WTC11 (cell line): ENCODE measurements at regions of chr19 and their contacts with region 1.

Region 1: DNA sequence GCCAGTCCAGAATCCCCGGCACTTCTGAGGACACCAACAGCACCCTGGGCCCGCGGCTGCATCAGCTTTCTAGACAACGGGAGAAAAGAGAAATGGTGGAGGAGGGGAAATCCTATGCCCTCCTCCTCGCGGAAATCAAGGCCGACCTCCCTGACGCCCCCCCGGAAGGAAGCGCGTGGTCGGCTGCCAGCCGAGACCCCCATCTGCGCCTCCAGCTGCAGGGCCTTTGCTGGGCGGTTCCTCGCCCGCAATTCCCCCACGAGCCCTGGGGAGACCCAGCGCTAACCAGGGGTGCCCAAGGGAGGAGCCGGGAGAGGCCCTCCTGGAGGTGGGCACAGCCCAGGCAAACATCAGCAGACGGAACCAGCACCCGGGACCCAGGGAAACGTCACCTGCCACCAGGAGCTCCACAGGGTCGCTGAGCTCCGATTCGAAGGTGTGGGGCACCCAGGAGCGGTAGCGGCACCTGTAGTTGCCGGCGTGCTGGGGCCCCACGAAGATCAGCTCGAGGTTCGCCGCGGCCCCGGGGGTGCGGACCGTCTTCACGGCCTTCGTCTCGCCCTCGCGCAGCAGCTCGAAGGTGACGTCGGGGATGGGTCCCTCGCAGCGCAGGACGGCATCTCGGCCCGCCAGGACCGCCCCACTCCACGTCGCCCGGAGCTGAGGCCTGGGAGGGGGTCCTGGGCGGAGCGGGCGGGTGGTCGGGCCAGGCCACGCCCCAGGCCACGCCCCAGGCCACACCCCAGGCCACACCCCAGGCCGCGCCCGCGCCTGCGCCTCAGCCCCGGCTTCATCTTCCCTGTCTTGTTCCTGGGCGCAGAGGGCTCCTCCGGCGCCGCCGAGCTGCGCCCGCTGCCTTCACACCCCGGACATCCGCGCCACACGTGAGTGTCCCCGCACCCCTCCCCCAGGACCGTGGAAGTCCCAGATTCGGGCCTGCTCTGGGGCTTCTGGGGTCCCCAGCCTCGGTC is 6.0 kb downstream of the A1BG start:
- DNase-seq: peak; percentile 67
- ATAC-seq: peak; percentile 96
- H3K4me3 Mint-ChIP-seq: peak overlapping the region; percentile 93
- H3K27ac Mint-ChIP-seq: no peak overlapping the region
- H3K4me1 Mint-ChIP-seq: peaks cover 3% of the 10 kb centered on the region; the same call in 1 of the 2 replicates
- H3K27me3 Mint-ChIP-seq: peaks cover 57% of the 10 kb centered on the region
- CTCF ChIP-seq: no peak

Region 2: GRCh38 chr19:58362272-58362994 is 15.2 kb after region 1 on chr19 and contains the start of gene ZNF497:
- CTCF ChIA-PET with region 1: interaction called, 22 read pairs
- POLR2A ChIA-PET with region 1: interaction called, 25 read pairs
- DNase-seq: peak; percentile 98
- ATAC-seq: peak; percentile 93
- H3K4me3 Mint-ChIP-seq: peak within 1 kb of the TSS; percentile 94
- H3K27ac Mint-ChIP-seq: peak within 1 kb of the TSS; percentile 96
- H3K4me1 Mint-ChIP-seq: peaks cover 6% of the 10 kb centered on the region; the same call in 1 of the 2 replicates
- H3K27me3 Mint-ChIP-seq: no peaks in the 10 kb centered on the region
- CTCF ChIP-seq: no peak
- total RNA-seq, gene ZNF497: 1.7 to 2.1 TPM (median 2.0 TPM) in 3 replicates